ENCODE measurements at regions of chr9 and their contacts with region 1.

Region 1: DNA sequence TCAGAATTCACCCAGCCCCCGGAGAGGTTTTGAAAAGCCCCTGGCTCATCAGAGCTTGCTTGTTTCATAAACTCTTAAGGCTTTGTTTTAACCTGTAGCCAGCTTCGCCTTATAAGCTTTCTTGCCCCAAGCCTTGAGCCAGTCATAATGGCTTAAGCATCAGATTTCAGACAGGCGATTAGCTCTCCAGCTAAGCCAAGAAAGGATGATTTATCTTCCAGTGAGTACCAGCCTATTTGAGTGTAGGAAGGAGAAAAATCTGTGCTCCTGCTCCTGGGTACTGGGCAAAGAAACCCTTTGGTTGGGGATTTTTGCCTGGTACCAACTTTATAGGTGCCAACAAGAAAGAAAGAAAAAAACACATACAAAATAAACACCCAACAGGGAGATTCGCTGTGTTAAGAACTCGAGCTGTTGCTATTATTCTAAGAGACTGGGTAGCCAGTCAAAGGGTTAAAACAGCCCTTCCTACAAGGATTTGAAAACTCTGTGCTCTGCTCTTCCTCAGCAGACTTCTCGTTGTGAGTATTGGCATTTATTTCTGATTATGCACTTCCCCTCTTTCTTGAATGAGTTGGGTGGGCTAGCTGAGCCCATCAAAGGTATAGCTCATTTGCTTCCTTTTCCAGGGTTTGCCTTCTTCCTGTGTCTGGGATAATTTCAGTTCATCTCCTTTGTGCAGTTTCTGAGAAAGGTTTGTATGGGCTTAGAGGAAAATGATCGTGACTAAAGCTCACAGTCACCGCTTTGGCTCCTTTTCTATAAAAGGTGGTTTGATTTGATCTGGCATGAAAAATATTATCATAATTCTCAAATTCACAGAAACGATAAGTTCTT is 157.2 kb upstream of the DMRT1 start:
- DNase-seq: no peak
- H3K4me3 ChIP-seq: no peak overlapping the region
- H3K4me3 Mint-ChIP-seq: no peak overlapping the region
- H3K27ac ChIP-seq: no peak overlapping the region
- H3K27ac Mint-ChIP-seq: no peak overlapping the region
- H3K4me1 ChIP-seq: no peaks in the 10 kb centered on the region
- H3K4me1 Mint-ChIP-seq: peaks cover 9% of the 10 kb centered on the region
- H3K27me3 ChIP-seq: no peaks in the 10 kb centered on the region
- H3K27me3 Mint-ChIP-seq: peaks cover 0 to 5% (median 0%) of the 10 kb centered on the region in 3 donors
- CTCF ChIP-seq: no peak

Region 2: GRCh38 chr9:626596-626995 is 57.7 kb before region 1 on chr9:
- intact Hi-C with region 1: loop called (anchors 10 kb)
- DNase-seq: no peak
- H3K4me3 ChIP-seq: no peak overlapping the region
- H3K4me3 Mint-ChIP-seq: no peak overlapping the region
- H3K27ac ChIP-seq: no peak overlapping the region
- H3K27ac Mint-ChIP-seq: no peak overlapping the region
- H3K4me1 ChIP-seq: peaks cover 7% of the 10 kb centered on the region in 2 donors
- H3K4me1 Mint-ChIP-seq: peaks cover 6% of the 10 kb centered on the region
- H3K27me3 ChIP-seq: no peaks in the 10 kb centered on the region
- H3K27me3 Mint-ChIP-seq: peaks cover 0 to 9% (median 3%) of the 10 kb centered on the region in 3 donors
- CTCF ChIP-seq: no peak

Region 3: DNA sequence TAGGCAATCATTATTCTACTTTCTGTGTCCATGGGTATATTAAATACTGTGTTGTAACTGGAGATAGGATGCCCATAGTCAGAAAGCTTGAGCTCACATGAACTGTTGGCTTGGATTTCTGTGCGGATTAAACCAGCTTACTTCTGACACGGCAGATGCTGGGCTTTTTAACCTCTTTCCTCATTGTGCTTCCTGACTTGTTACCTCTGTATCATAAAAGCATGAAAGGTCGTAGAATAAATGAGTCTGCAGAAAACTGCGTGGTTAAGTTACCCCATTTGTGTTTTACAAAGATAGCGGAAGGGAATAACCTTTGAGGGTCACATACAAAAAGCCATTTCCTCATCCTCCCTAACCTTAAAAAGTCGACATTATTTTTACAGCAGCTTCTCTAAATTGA is 42.3 kb before region 1 on chr9:
- intact Hi-C with region 1: no loop called
- DNase-seq: peak; percentile 13 to 34 (median 23)
- H3K4me3 ChIP-seq: no peak overlapping the region
- H3K4me3 Mint-ChIP-seq: peak overlapping the region in 1 of 2 donors; percentile 15
- H3K27ac ChIP-seq: no peak overlapping the region
- H3K27ac Mint-ChIP-seq: peak overlapping the region in 3 of 7 donors; percentile 25 to 56 (median 56)
- H3K4me1 ChIP-seq: peaks cover 9 to 10% of the 10 kb centered on the region in 2 donors
- H3K4me1 Mint-ChIP-seq: peaks cover 17% of the 10 kb centered on the region
- H3K27me3 ChIP-seq: no peaks in the 10 kb centered on the region
- H3K27me3 Mint-ChIP-seq: peaks cover 0 to 5% (median 0%) of the 10 kb centered on the region in 3 donors
- CTCF ChIP-seq: no peak

Region 4: GRCh38 chr9:696332-697323 is 12.4 kb after region 1 on chr9:
- intact Hi-C with region 1: no loop called
- DNase-seq: no peak
- H3K4me3 ChIP-seq: no peak overlapping the region
- H3K4me3 Mint-ChIP-seq: no peak overlapping the region
- H3K27ac ChIP-seq: no peak overlapping the region
- H3K27ac Mint-ChIP-seq: no peak overlapping the region
- H3K4me1 ChIP-seq: peaks cover 0 to 5% of the 10 kb centered on the region in 2 donors
- H3K4me1 Mint-ChIP-seq: peaks cover 17% of the 10 kb centered on the region
- H3K27me3 ChIP-seq: no peaks in the 10 kb centered on the region
- H3K27me3 Mint-ChIP-seq: peaks cover 3 to 5% (median 3%) of the 10 kb centered on the region in 3 donors
- CTCF ChIP-seq: no peak

Region 5: GRCh38 chr9:706606-707459 is 22.6 kb after region 1 on chr9:
- intact Hi-C with region 1: loop called in 1 of 2 experiments (anchors 2 kb)
- DNase-seq: peak; percentile 50 to 74 (median 63)
- H3K4me3 ChIP-seq: peak overlapping the region; percentile 49 to 92 (median 86)
- H3K4me3 Mint-ChIP-seq: peak overlapping the region; percentile 81 to 96
- H3K27ac ChIP-seq: peak overlapping the region; percentile 23 to 76
- H3K27ac Mint-ChIP-seq: peak overlapping the region in 5 of 7 donors; percentile 10 to 81 (median 47)
- H3K4me1 ChIP-seq: peaks cover 14 to 22% of the 10 kb centered on the region in 2 donors
- H3K4me1 Mint-ChIP-seq: peaks cover 25% of the 10 kb centered on the region
- H3K27me3 ChIP-seq: no peaks in the 10 kb centered on the region
- H3K27me3 Mint-ChIP-seq: peaks cover 0 to 9% (median 6%) of the 10 kb centered on the region in 3 donors
- CTCF ChIP-seq: no peak

Region 6: DNA sequence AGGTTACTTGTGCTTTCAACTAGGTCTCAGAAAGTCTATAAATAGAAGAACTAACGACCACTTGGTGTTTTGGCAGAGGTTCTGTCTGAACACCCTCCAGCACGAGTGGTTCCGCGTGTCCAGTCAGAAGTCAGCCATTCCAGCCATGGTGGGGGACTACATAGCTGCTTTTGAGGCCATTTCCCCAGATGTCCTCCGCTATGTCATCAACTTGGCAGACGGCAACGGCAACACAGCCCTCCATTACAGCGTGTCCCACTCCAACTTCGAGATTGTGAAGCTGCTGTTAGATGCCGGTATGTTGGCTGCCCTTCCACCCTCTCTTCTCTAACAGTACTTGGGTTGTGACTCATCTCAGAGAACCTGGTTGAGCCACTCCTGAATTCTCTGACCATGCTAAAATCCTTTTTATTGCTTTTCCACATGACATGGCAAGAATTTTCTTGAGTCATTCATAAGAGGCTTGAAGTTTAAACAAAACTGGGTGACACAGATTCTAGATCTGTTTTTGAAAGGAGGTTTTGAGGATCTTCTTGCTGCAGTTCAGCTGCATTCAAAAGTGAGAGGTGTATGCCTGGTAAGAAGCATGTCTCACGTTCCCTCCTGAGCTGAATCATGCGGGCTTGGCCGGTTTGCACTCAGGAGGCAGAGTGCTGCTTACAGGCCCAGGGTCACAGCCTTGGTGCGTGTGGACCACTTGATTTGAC is 54.1 kb after region 1 on chr9:
- intact Hi-C with region 1: no loop called
- DNase-seq: no peak
- H3K4me3 ChIP-seq: no peak overlapping the region
- H3K4me3 Mint-ChIP-seq: no peak overlapping the region
- H3K27ac ChIP-seq: no peak overlapping the region
- H3K27ac Mint-ChIP-seq: no peak overlapping the region
- H3K4me1 ChIP-seq: no peaks in the 10 kb centered on the region
- H3K4me1 Mint-ChIP-seq: no peaks in the 10 kb centered on the region
- H3K27me3 ChIP-seq: no peaks in the 10 kb centered on the region
- H3K27me3 Mint-ChIP-seq: peaks cover 0 to 3% (median 3%) of the 10 kb centered on the region in 3 donors
- CTCF ChIP-seq: no peak